Common myeloid progenitor, CD34-positive (primary cell): ENCODE measurements at regions of chr1 and their contacts with region 1.

Region 1: GRCh38 chr1:182614796-182615454 is 10.7 kb upstream of the RGS16 start:
- DNase-seq: peak; percentile 38 to 68 (median 54)
- H3K4me3 ChIP-seq: peak overlapping the region; percentile 37 to 81 (median 61)
- H3K27ac ChIP-seq: no peak overlapping the region
- H3K4me1 ChIP-seq: peaks cover 8 to 33% (median 26%) of the 10 kb centered on the region in 4 experiments
- H3K27me3 ChIP-seq: peaks cover 3 to 36% (median 20%) of the 10 kb centered on the region in 5 experiments

Region 2: DNA sequence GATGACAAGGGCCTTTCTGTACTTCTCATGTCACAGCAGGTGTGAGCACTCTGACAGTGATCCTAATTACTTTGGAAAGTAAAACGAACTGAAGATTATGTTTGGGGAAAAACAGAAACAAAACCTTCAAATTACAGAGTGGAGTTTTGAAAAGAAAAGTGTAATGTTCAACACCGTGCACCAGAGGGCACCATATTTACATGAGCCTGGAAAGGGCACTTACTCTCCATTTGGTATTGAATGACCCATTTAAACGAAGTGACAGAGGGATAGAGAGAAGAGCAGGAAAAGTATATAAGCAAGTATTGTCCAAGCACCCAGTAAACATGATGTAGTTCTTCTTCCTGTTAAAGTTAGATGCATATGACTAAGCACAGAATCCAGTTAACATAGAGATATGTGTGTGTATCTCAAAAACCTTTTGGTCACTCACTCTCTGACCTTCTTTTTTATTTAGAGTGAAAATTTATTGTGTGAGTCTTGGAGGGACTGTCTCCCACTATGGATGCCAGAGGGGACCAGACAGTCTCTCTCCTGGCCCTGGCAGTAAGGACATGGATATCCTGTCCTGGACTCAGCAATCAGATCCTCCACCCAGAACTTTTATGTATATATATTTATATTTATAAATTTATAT is 168.8 kb before region 1 on chr1:
- CTCF ChIA-PET with region 1: no interaction called
- POLR2A ChIA-PET with region 1: no interaction called
- DNase-seq: peak; percentile 44 to 66 (median 63)
- H3K4me3 ChIP-seq: no peak overlapping the region
- H3K27ac ChIP-seq: no peak overlapping the region
- H3K4me1 ChIP-seq: no peaks in the 10 kb centered on the region
- H3K27me3 ChIP-seq: no peaks in the 10 kb centered on the region

Region 3: DNA sequence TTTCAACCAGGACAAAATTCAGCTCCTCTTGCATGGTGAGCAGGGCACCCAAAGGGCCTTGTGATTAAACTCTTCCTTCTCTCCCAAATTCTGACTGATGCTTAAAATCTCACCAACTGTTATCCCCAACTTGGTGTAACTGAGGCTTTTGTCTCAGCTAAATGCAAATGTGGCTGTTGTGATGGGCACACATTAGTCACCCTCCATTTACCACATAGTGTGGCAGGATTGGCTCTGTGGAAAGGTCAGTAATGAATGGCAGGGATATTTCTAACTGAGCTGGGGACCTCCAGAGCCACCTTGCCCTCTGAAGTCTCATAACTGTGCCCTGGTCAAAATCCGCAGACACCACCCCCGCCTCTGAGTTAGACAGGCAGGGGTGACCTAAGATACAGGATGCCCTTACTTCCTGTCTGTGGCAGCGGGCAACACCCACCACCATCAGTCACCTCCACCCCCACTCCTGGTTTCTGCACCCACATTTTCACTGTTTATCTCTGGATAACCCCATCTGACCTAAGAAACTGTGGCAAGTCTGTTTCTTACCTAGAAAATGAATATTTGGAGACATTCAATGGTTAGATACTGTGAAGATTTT is 14.7 kb after region 1 on chr1:
- CTCF ChIA-PET with region 1: interaction called, 12 read pairs
- POLR2A ChIA-PET with region 1: interaction called, 9 read pairs
- DNase-seq: peak in 2 of 3 donors; percentile 29 to 48
- H3K4me3 ChIP-seq: peak overlapping the region in 1 of 7 experiments; percentile 7
- H3K27ac ChIP-seq: no peak overlapping the region
- H3K4me1 ChIP-seq: peaks cover 0 to 24% (median 11%) of the 10 kb centered on the region in 4 experiments
- H3K27me3 ChIP-seq: no peaks in the 10 kb centered on the region